ENCODE measurements at regions of chr12 and their contacts with region 1.

Region 1: DNA sequence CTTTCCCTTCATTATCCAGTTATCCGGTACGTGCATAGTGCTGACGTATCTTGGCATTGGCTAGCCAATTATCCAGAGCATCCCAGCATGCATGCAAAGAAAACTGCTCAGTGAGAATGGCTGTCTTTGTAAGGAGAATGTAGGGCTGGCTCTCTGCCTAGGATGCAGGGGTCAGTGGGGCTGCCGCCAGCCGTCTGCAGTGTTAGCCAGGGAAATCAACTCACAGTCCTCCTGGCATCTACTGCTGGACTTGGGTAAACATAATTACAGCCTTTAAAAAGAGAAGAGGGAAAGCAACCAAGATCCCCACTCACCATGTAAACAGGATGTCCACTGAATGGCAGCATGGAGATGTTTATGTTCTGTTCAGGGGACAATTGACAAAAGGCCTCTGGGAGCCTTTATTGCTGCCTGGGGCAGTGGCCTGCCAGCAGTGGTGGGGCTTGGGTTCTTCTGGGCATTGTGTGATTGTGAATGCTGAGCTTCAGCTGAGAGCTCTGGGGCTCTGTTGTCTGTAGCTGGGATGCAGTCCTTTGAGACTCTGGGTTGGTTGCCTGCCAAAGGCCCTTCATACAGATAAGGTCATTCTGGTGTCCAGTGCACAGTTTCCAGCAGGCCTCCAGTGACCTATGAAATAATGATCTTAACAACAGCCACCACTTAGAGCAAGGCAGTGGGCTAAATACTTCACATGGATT is 121.8 kb downstream of the TBC1D30 start:
- DNase-seq: no peak
- H3K4me3 ChIP-seq: no peak overlapping the region
- H3K4me3 Mint-ChIP-seq: no peak overlapping the region
- H3K27ac ChIP-seq: no peak overlapping the region
- H3K27ac Mint-ChIP-seq: no peak overlapping the region
- H3K4me1 ChIP-seq: no peaks in the 10 kb centered on the region
- H3K4me1 Mint-ChIP-seq: peaks cover 0 to 3% (median 0%) of the 10 kb centered on the region in 4 donors
- H3K27me3 ChIP-seq: no peaks in the 10 kb centered on the region
- H3K27me3 Mint-ChIP-seq: peaks cover 5 to 7% of the 10 kb centered on the region in 2 donors

Region 2: GRCh38 chr12:64911081-64911480 is 35.2 kb before region 1 on chr12:
- CTCF ChIA-PET with region 1: no interaction called
- POLR2A ChIA-PET with region 1: no interaction called
- intact Hi-C with region 1: loop called (anchors 1 kb)
- DNase-seq: no peak
- H3K4me3 ChIP-seq: no peak overlapping the region
- H3K4me3 Mint-ChIP-seq: no peak overlapping the region
- H3K27ac ChIP-seq: no peak overlapping the region
- H3K27ac Mint-ChIP-seq: no peak overlapping the region
- H3K4me1 ChIP-seq: no peaks in the 10 kb centered on the region
- H3K4me1 Mint-ChIP-seq: no peaks in the 10 kb centered on the region
- H3K27me3 ChIP-seq: peaks cover 5% of the 10 kb centered on the region
- H3K27me3 Mint-ChIP-seq: peaks cover 4 to 11% of the 10 kb centered on the region in 2 donors

Measured in CD4-positive, alpha-beta memory T cell (primary cell).